ENCODE measurements at regions of chr13 and their contacts with region 1.

Region 1: DNA sequence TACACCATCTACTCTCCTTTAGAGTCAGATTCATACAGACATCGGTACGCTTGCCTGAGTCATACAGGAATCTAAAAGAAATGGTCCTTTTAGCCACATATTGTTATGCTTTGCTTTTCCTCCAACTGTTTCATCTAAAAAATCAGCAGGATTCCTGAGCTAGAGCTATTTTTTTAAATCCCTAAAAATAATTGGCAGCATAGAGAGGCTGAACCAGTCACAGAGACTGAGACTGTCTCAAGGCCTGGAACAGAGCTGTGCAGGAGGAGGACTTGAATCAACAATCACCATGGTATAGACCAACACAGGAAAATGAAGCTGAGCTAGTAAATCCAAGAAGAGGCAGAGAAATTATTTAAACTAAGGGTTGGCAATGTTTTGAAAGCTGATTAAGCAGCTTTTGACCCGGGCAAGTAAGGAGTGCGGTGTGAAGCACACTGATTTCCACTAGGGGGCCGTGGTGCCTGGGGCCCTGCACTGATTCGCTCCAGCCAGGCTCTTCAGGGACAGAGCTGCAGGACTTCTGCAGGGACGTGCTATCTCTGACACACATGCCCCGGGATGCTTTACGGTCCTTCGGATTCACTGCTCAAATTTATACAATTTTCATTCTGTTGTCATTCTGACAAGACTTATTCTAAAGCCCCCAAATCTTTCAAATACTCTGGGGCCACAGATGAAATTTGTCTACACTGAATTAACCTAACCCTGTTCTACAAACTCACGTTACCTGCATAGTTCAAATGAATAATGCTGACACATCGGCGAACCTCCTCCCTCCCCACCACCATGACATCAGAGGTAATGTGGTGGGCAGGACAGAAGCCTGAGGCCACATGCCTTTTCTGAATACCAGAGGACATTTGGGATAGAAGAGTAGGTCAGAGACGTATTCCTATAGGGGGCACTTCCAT is 87.6 kb upstream of the SLC15A1 start:
- DNase-seq: no peak
- H3K4me3 ChIP-seq: no peak overlapping the region
- H3K27ac ChIP-seq: no peak overlapping the region
- H3K4me1 ChIP-seq: peaks cover 0 to 10% (median under 1%) of the 10 kb centered on the region in 3 donors
- H3K27me3 ChIP-seq: no peaks in the 10 kb centered on the region
- CTCF ChIP-seq: peak; percentile 44 to 77 (median 70)
- POLR2A ChIP-seq: no peak

Region 2: DNA sequence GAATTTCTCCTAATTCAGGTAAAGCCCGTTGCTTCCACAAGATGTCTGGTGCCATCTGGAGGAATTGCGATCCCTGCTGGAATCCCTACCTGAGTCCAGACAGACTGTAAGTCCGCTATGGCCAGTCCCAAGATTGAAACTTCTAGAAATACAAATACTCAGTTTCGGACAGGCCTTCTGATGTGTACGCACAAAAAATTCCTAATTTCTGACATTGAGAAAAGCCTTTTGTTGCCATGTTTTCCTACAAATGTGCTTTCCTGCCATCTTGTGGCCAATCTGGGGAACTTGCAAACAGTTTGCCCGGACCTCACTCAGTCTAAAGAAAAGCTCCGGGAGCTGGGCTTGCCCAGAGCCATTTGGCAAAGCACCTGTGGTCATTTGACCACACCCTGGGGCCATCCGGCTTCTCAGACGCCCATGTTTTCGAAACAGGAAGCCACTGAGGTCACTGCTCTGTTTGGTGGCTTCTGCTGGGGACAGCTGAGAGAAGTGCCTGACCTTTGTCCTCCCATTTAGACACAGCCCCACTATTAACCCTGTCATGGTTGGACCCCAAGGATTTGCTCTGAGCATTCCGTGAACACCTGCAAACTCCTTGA is 167.1 kb before region 1 on chr13:
- intact Hi-C with region 1: no loop called
- DNase-seq: no peak
- H3K4me3 ChIP-seq: no peak overlapping the region
- H3K27ac ChIP-seq: no peak overlapping the region
- H3K4me1 ChIP-seq: peaks cover 0 to 42% (median 8%) of the 10 kb centered on the region in 3 donors
- H3K27me3 ChIP-seq: no peaks in the 10 kb centered on the region
- CTCF ChIP-seq: peak; percentile 75 to 89 (median 84)
- POLR2A ChIP-seq: no peak

Region 3: GRCh38 chr13:98751861-98752466 is 88.1 kb before region 1 on chr13:
- intact Hi-C with region 1: loop called (anchors 5 kb)
- DNase-seq: no peak
- H3K4me3 ChIP-seq: peak overlapping the region; percentile 22 to 68 (median 38)
- H3K27ac ChIP-seq: no peak overlapping the region
- H3K4me1 ChIP-seq: peaks cover 8 to 16% (median 11%) of the 10 kb centered on the region in 3 donors
- H3K27me3 ChIP-seq: peaks cover 0 to 65% (median 11%) of the 10 kb centered on the region in 4 donors
- CTCF ChIP-seq: no peak
- POLR2A ChIP-seq: no peak

Region 4: GRCh38 chr13:98938801-98939200 is 98.7 kb after region 1 on chr13:
- intact Hi-C with region 1: no loop called
- DNase-seq: no peak
- H3K4me3 ChIP-seq: no peak overlapping the region
- H3K27ac ChIP-seq: peak overlapping the region in 3 of 4 donors; percentile 69 to 74 (median 69)
- H3K4me1 ChIP-seq: peaks cover 11 to 56% (median 23%) of the 10 kb centered on the region in 3 donors
- H3K27me3 ChIP-seq: no peaks in the 10 kb centered on the region
- CTCF ChIP-seq: no peak
- POLR2A ChIP-seq: no peak

Region 5: GRCh38 chr13:99053636-99054233 is 213.6 kb after region 1 on chr13:
- intact Hi-C with region 1: no loop called
- DNase-seq: no peak
- H3K4me3 ChIP-seq: no peak overlapping the region
- H3K27ac ChIP-seq: peak overlapping the region in 2 of 4 donors; percentile 35 to 79
- H3K4me1 ChIP-seq: peaks cover 38 to 93% (median 72%) of the 10 kb centered on the region in 3 donors
- H3K27me3 ChIP-seq: no peaks in the 10 kb centered on the region
- CTCF ChIP-seq: no peak
- POLR2A ChIP-seq: no peak

Measured in esophagus squamous epithelium (tissue), 5 donors.